ENCODE measurements at regions of chr6 and their contacts with region 1.

Region 1: GRCh38 chr6:133923938-133924593 is 29.0 kb upstream of the TBPL1 start:
- DNase-seq: peak; percentile 33
- H3K4me3 ChIP-seq: no peak overlapping the region
- CTCF ChIP-seq: peak; percentile 68

Region 2: GRCh38 chr6:133891149-133891926 is 32.7 kb before region 1 on chr6:
- CTCF ChIA-PET with region 1: interaction called, 11 read pairs
- POLR2A ChIA-PET with region 1: no interaction called
- DNase-seq: no peak
- H3K4me3 ChIP-seq: peak overlapping the region; percentile 71
- CTCF ChIP-seq: no peak

Region 3: GRCh38 chr6:133939778-133940667 is 16.0 kb after region 1 on chr6:
- CTCF ChIA-PET with region 1: interaction called, 71 read pairs
- POLR2A ChIA-PET with region 1: no interaction called
- DNase-seq: no peak
- H3K4me3 ChIP-seq: no peak overlapping the region
- CTCF ChIP-seq: no peak

Region 4: DNA sequence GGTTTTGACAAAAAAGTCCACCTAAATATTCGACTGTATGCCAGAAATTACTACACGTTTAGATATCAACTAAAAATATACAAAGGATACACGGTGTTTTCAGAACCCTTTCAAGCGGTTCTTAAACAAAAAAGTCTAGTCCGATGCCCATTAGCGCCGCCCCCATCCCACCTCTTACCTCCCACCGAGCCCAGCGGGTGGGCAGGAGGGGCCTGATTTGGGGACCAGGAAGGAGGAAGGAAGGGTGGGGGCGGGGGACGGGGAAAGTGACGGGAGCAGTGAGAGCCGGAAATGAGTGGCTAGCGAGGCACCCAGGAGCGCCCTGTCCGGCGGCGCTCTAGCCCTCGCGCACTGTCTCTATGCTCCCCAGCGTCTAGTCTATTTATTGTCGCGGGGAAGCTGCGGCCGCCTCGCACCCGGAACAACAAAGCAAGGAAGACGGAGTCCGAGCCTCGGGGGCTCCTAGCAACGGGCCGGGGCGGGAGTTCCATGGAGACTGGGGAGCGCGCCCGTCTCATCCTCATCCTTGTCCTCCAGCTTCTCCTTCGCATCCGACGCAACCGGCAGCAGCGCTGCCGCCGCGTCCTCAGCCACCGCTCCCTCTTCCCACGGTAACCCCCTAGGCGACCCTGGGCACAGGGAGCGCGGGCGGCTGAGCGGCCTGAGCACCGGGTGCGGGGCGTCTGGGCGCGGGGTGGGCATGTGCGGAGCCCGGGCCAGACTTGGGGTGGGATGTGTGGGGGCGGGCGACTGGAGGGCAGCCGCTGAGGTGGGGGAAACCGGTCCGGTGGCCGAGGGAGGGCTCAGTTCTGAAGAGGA is 29.0 kb after region 1 on chr6 and contains the start of gene TBPL1:
- CTCF ChIA-PET with region 1: interaction called, 21 read pairs
- POLR2A ChIA-PET with region 1: no interaction called
- DNase-seq: peak; percentile 69
- H3K4me3 ChIP-seq: peak within 1 kb of the TSS; percentile 82
- CTCF ChIP-seq: no peak

Region 5: DNA sequence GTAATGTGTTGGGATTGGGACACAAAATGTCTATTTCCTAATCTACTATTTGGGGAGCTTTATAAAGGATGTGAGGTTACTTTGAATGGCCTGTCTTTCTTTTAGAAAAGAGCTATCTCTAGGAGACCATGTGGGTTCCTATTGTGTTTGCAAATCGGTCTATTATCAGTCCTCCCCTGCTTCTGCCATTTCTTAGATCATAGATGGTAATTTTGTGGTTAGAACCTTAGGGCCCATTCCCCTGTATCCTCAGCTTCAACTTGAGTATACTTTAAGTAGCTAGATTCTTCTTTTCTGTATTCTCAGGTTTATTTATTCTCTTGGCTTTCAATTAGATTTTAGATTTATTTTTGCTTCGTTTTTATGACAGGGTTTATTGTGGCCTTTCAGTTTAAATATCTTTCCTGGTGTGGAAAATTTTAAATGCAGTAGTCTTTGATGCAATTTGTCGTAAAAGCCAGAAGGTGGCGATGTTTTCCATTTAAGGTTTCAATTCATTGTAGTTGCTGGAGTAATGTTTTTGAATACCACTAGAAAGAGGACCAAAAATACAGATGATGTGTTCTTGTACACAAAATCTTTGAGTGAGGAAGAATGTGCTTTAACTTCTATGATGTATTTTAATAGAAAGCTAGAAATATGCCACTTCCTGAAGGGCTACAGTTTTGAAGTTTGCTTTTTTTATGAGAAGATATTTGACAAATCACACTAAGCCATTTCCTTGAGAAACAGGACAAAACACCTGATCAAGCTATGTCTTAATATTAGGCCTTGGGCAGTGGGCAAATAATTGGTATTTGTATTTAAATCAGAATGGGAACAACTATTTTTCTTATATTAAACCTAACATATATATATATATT is 49.3 kb after region 1 on chr6:
- CTCF ChIA-PET with region 1: interaction called, 63 read pairs
- POLR2A ChIA-PET with region 1: no interaction called
- DNase-seq: no peak
- H3K4me3 ChIP-seq: no peak overlapping the region
- CTCF ChIP-seq: no peak

Region 6: GRCh38 chr6:134074151-134075055 is 150.3 kb after region 1 on chr6:
- CTCF ChIA-PET with region 1: interaction called, 11 read pairs
- POLR2A ChIA-PET with region 1: no interaction called
- DNase-seq: no peak
- H3K4me3 ChIP-seq: no peak overlapping the region
- CTCF ChIP-seq: no peak

Region 7: DNA sequence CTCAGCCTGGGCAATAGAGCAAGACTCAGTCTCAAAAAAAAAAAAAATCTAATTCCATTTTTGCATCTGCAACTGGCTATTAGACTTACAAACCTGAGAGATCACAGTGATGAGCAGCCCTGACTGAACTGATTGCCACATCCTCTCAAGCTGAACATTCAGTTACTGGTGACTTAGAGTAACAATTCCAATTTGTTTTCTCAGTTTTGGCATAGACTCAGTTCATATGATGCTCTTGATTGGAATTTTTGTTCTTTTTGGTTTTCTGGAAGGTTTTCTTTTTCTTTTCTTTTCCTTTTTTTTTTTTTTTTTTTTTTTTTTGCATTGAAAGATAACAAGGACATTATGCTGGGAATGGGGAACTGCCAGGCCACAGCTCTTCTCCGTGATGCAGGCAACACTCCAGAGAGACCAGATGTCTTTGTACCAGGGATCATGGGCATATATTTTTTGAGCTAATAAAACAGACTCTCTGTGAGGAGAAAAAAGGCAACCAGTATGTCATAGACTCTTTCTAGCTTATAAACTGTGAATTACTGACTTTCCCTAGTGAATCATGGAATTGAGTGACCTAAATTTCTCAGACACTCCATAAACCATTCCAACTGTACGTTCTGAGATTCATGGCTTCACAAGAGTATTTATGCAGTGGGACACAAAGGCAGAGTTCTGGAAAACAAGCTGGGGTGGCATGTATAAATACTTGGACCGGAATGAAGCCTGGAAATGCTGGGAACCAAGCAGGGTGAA is 214.3 kb after region 1 on chr6:
- CTCF ChIA-PET with region 1: no interaction called
- POLR2A ChIA-PET with region 1: no interaction called
- DNase-seq: no peak
- H3K4me3 ChIP-seq: no peak overlapping the region
- CTCF ChIP-seq: no peak